ENCODE measurements at regions of chr5 and their contacts with region 1.

Region 1: DNA sequence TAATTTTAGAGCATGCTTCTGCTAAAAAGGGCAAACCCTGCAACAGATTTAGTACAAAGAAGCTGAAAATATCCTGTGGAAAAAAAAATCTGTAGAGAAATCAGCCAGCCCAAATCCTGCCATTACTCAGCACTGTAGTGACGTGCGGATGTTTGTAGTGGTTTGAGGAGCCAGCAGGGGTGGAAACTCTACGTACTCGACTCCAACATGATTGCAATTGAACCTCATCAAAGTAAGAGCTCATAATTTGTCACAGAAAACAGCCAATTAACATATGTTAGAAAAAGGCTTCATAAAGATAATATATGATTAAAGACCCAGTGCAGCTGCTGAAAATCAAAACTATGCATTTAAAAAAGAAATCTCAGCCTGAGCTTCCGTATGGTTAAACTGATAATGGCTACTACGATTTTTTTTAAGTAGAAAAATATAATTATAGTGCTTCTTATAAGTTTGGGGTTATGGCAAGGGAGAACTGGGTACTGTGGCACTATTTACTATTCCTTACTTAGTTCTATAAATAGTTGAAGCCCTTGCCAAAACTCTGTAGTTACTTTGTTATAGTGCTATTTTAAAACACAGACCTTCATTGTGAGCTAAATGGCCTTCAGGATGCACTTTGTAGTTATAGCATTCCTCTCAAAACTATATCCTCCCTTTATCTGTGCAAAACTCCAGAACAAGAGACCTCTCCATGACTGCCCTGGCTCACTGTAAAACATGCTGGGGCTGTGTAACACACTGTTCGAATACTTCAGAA is 49.4 kb downstream of the MEF2C start:
- DNase-seq: no peak
- ATAC-seq: peak; percentile 50 to 70 (median 65)
- H3K4me3 ChIP-seq: peak overlapping the region; percentile 19
- H3K27ac ChIP-seq: peak overlapping the region; percentile 87
- H3K4me1 ChIP-seq: peaks cover 92% of the 10 kb centered on the region
- H3K27me3 ChIP-seq: no peaks in the 10 kb centered on the region
- CTCF ChIP-seq: peak; percentile 4

Region 2: DNA sequence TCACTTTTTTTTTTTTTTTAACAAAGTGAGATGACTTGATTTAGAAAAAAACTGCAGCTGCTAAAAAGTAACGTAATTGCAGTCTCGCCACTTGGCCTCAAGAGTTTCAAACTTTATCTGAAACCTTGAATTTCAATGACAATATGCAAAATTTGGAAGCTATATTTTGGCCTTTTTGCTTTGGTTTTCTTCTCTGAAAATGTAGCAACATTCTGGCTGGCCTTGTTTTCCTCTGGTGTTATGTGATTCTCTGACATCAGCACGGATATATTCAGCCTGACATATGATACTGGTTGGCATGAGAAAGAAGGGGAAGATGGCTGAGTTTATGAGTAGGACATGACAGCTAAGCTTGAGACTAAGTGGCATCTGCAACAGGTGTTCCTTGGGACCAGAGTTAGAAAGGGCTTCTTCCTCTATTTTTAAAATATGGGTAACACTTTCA is 87.1 kb before region 1 on chr5:
- intact Hi-C with region 1: loop called in 1 of 2 experiments (anchors 10 kb)
- DNase-seq: no peak
- ATAC-seq: peak; percentile 89 to 95 (median 91)
- H3K4me3 ChIP-seq: no peak overlapping the region
- H3K27ac ChIP-seq: peak overlapping the region; percentile 84
- H3K4me1 ChIP-seq: peaks cover 61% of the 10 kb centered on the region
- H3K27me3 ChIP-seq: no peaks in the 10 kb centered on the region
- CTCF ChIP-seq: no peak

Region 3: GRCh38 chr5:88872971-88873370 is 39.4 kb after region 1 on chr5:
- intact Hi-C with region 1: loop called in 1 of 2 experiments (anchors 5 kb)
- DNase-seq: no peak
- ATAC-seq: peak in 2 of 4 donors; percentile 27 to 30
- H3K4me3 ChIP-seq: peak overlapping the region; percentile 26
- H3K27ac ChIP-seq: peak overlapping the region; percentile 88
- H3K4me1 ChIP-seq: peaks cover 43% of the 10 kb centered on the region
- H3K27me3 ChIP-seq: no peaks in the 10 kb centered on the region
- CTCF ChIP-seq: no peak

Region 4: DNA sequence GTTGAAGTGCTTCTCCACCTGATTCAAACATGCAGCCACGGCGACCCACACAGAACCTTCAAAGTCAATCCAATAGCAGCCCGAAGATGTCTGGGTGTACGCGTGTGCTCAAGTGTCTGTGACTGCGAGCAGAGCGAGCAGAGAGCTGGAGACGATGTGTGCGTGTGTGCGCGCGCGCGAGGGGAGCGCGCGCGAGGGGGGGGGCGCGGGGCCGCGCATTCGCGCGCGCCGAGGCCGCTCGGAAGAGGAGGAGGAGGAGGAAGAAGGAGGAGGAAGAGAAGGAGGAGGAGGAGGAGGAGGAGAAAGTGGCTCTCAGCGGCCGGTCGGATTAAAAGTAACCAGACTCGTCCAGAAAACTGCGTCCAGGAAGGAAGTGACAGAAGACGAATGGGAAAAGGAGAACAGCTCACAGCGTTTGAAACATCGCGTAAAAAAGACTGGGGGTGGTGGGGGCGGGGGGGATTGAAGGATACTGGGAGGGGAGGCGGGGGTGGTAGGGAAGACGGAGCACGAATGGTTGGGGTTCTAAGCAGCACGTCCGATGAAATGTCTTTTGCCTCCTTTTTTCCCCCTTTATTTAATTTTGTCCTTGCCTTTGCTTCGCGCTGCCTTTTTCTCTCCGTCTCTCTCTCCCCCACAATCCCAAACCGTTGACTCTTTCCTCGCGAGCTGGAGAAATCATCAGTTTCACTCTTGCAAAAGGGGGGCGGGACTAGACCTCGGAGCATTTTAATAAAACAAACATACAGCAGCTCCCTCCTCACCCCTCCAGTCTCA is 49.7 kb after region 1 on chr5 and contains the start of gene MEF2C:
- intact Hi-C with region 1: loop called (anchors 5 kb)
- DNase-seq: peak; percentile 74 to 88
- ATAC-seq: peak; percentile 80 to 86 (median 84)
- H3K4me3 ChIP-seq: peak within 1 kb of the TSS; percentile 76
- H3K27ac ChIP-seq: peak within 1 kb of the TSS; percentile 88
- H3K4me1 ChIP-seq: peaks cover 56% of the 10 kb centered on the region
- H3K27me3 ChIP-seq: no peaks in the 10 kb centered on the region
- CTCF ChIP-seq: no peak
- total RNA-seq, gene MEF2C: 148 to 530 (median 257) TPM